ENCODE measurements at regions of chr22 and their contacts with region 1.

Region 1: DNA sequence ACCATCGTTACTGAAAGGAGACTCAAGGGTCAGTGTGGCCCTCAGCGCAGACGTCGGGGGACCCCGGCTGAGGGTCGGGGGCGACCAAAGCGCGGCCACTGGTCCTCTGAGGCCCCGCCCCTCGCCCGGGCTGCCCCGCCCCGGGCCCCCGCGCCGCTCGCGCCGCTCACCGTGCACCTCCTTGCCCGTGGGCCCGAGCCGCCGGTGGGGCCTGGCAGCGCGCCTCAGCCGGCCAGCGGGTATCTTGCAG is 468 bp downstream of the ANKRD54 start:
- DNase-seq: no peak
- H3K4me3 ChIP-seq: peak overlapping the region; percentile 92
- H3K27ac ChIP-seq: peak overlapping the region; percentile 35
- H3K4me1 ChIP-seq: peaks cover 23% of the 10 kb centered on the region
- H3K27me3 ChIP-seq: no peaks in the 10 kb centered on the region
- CTCF ChIP-seq: no peak

Region 2: DNA sequence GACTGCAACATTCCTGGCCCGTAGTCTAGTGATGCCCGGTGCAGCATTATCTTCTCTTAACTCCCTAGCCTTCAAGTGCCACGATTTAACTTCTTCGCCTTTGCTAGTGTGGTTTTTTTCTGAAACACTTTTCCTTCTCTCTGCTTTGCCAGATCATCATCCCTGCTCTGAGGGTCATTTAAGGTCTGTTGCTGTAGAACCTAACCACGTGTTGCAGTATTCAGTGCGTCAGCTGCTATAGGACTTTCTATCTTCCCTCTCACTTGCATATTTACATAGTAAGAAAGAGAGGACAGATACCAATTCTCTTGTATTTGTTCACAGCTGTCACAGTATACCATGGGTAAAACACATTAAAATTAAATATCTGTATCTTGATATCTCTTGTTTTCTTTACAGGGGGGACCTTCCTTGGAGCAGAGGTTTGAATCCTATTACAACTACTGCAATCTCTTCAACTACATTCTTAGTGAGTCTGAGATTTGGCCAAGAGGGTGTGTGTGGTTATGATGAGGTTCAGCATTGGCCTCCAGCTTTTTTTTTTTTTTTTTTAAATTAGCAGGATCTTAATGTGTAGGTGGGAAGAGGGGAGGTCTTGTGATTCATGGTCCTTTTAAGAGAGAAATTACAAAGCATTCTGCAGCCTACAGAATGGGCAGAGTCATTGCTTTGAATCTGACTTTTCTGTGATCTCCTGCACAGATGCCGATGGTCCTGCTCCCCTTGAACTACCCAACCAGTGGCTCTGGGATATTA is 19.1 kb after region 1 on chr22:
- CTCF ChIA-PET with region 1: interaction called, 12 read pairs
- POLR2A ChIA-PET with region 1: no interaction called
- intact Hi-C with region 1: no loop called
- DNase-seq: no peak
- H3K4me3 ChIP-seq: no peak overlapping the region
- H3K27ac ChIP-seq: no peak overlapping the region
- H3K4me1 ChIP-seq: no peaks in the 10 kb centered on the region
- H3K27me3 ChIP-seq: no peaks in the 10 kb centered on the region
- CTCF ChIP-seq: no peak

Measured in PC-9 (cell line).